Esophagus muscularis mucosa (tissue), 4 donors: ENCODE measurements at regions of chr11 and their contacts with region 1.

Region 1: GRCh38 chr11:111601979-111602864 is at the start of gene SIK2:
- DNase-seq: peak; percentile 96
- H3K4me3 ChIP-seq: peak within 1 kb of the TSS; percentile 77 to 94 (median 88)
- H3K27ac ChIP-seq: peak within 1 kb of the TSS; percentile 92 to 99 (median 97)
- H3K4me1 ChIP-seq: peaks cover 19 to 56% (median 47%) of the 10 kb centered on the region in 4 donors
- H3K27me3 ChIP-seq: no peaks in the 10 kb centered on the region
- CTCF ChIP-seq: peak; percentile 92 to 97 (median 97)
- EP300 ChIP-seq: no peak
- POLR2A ChIP-seq: no peak
- total RNA-seq, gene SIK2: 14.5 to 22.1 (median 17.4) TPM

Region 2: DNA sequence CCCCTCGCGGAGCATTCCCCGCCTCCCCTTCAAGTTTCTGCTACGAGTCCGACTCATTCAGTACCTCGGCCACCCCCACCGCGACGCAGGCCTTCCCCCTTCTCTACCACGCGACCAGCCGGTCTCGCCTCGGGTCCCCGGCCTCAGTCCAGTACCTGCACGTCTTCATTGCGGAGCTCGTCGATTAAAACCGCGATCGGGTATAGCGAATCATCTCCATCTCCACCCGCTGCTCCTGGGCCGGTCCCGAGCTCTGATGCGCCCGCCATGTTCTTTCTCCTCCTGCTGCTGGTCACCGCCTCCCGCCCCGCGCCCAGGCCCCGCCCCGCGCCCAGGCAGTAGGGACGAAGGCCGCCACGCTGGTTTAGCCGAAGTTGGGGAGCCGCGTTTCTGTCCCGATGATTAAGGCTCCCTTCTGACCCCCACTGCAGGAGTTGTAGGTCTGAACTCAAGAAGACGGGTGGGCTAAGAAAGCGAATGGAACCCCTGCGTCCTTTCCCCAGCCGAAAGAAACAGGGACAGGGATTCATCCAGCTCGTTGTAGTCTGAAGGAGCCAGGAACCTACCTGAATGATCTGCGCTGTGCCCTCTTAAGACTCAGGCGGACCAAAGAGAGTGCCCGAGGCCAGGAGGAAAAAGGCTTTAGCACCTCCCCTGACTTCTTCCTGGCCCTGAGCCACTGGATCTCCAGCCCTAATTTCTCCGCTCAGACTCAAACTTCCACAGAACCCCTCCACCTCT is 164.0 kb after region 1 on chr11 and contains the start of gene PPP2R1B:
- intact Hi-C with region 1: loop called (anchors 2 kb)
- DNase-seq: peak; percentile 98
- H3K4me3 ChIP-seq: peak within 1 kb of the TSS; percentile 72 to 93 (median 80)
- H3K27ac ChIP-seq: peak within 1 kb of the TSS; percentile 90 to 93 (median 91)
- H3K4me1 ChIP-seq: peaks cover 4 to 39% (median 37%) of the 10 kb centered on the region in 4 donors
- H3K27me3 ChIP-seq: no peaks in the 10 kb centered on the region
- CTCF ChIP-seq: no peak
- EP300 ChIP-seq: no peak
- POLR2A ChIP-seq: no peak
- total RNA-seq, gene PPP2R1B: 9.6 to 12.8 (median 10.5) TPM

Region 3: GRCh38 chr11:111777094-111778046 is 175.1 kb after region 1 on chr11:
- intact Hi-C with region 1: loop called (anchors 1 kb)
- DNase-seq: no peak
- H3K4me3 ChIP-seq: no peak overlapping the region
- H3K27ac ChIP-seq: peak overlapping the region in 1 of 4 donors; percentile 13
- H3K4me1 ChIP-seq: peaks cover 6 to 14% (median 10%) of the 10 kb centered on the region in 4 donors
- H3K27me3 ChIP-seq: no peaks in the 10 kb centered on the region
- CTCF ChIP-seq: peak; percentile 75 to 85 (median 75)
- EP300 ChIP-seq: no peak
- POLR2A ChIP-seq: no peak